Dorsolateral prefrontal cortex (tissue), 120 donors: ENCODE measurements at regions of chr19 and their contacts with region 1.

Region 1: DNA sequence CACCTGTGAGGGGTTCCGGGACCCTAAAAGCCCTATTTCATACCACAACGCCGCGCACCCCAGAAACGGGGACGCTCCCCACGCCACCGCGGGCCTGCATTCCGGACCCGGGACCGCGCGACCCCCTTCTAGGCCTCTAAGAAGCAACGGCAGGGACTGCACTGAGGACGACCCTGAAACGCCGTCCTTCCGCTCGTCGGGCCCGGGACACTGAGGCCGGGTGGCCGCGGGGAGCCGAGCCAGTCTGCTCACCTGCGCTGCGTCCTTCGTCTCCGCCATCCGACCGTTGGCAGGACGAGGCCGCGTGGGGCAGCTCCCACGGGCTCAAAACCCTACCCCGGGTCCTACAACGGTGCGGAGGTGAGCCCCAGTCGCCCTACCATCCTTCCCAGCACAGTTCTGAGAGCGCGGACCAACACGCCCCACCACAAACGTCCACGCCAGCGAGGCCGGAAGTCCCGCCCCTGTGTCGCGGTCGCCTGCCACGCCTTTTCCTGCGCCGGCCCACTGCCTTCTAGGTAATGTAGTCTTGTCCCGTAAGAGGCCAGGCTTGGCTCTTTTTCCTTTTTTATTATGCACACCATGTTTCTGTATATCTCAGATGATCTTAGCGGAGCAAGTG is at the start of gene ZNF550:
- DNase-seq: peak; percentile 86 to 95 (median 93)
- H3K4me3 ChIP-seq: peak within 1 kb of the TSS; percentile 52 to 100 (median 95)
- H3K27ac ChIP-seq: peak within 1 kb of the TSS in 40 of 59 donors; percentile 7 to 86 (median 54)
- H3K27me3 ChIP-seq: no peaks in the 10 kb centered on the region
- CTCF ChIP-seq: peak in 11 of 56 donors; percentile 8 to 33 (median 13)
- total RNA-seq, gene ZNF550: 7.5 to 17.7 (median 12.4) TPM

Region 2: DNA sequence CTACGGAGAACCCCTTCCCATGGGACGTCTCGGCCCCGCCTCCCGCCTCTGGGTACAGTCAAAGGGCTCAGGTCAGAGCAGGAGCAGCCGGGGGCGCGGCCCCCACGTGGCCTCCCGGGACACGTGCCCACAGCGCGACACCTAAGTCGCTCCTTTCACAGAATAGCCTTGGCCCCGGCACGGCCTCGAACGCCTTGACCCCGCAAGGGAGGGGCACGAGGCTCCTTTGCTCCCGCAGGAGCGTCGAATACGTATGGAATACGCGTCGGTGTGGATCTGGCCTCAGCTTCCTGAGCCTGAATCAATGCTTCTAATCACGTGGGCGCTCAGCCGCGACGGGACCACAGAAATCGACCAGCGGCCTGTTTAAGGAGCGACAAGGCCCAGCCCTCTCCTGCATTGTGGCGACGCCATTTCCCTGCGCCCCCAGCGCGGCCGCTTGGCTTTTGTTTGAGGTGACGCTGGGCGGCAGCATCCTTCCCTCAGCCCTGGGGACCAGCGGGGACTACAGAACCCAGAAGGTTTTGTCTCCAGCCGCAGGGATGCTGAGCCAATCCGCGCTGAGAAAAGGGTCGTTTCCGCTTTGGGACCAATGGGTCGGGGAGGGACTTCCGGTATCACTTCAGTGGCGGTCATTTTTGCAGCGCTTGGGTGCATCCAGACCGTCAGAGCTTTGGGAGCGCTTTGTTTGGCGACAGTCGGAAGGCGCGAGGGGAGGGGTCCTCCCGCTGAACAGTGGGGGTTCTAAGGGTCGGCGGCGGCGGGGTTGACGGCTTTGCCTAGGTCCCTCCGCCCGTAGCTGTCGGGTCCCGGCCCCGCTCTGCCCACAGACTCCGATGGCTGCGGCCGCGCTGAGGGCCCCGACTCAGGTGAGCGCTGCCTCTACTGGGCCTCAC is 24.3 kb after region 1 on chr19 and contains the start of gene ZIK1:
- intact Hi-C with region 1: no loop called
- DNase-seq: peak; percentile 90 to 98 (median 96)
- H3K4me3 ChIP-seq: peak within 1 kb of the TSS; percentile 59 to 94 (median 82)
- H3K27ac ChIP-seq: peak within 1 kb of the TSS in 48 of 59 donors; percentile 21 to 93 (median 75)
- H3K27me3 ChIP-seq: no peaks in the 10 kb centered on the region
- CTCF ChIP-seq: peak in 53 of 56 donors; percentile 3 to 65 (median 45)
- total RNA-seq, gene ZIK1: 3.1 to 9.5 (median 6.6) TPM

Region 3: DNA sequence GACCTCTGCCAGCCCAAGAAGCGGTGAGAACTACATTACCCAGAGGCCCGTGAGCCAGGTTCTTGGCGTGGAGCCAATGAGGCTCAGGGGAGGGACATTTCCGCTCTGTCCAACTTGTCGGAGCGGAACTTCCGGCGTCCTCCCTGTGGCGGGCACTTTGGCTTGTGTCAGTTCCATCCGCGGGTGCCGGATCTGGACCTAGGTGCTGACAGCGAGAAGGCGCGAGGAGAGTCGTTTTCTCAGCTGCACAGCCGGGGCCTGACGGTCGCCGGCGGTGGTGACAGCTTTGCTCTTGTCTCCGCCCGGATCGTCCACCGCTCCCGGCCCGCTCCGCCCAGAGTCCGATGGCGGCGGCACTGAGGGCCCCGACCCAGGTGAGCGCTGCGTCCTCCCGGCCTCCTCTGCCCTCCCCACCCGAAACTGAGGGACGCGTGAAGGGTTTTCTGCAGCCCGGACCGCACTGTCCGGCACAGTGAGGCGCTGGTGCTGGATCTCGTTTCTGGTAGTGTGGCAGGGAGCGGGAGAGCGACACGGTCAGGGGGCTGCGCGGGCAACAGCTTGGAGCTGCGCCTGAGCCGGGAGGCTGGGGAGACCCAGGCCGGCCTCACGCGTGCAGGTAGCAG is 40.4 kb after region 1 on chr19 and contains the start of gene ZNF530:
- intact Hi-C with region 1: loop called in 1 of 2 experiments (anchors 1 kb)
- DNase-seq: peak; percentile 88 to 97 (median 94)
- H3K4me3 ChIP-seq: peak within 1 kb of the TSS; percentile 64 to 97 (median 85)
- H3K27ac ChIP-seq: peak within 1 kb of the TSS in 16 of 59 donors; percentile 10 to 62 (median 28)
- H3K27me3 ChIP-seq: no peaks in the 10 kb centered on the region
- CTCF ChIP-seq: peak in 43 of 56 donors; percentile 11 to 56 (median 32)
- total RNA-seq, gene ZNF530: 1.1 to 10.3 (median 4.1) TPM